IMR-90 (cell line): ENCODE measurements at regions of chr3 and their contacts with region 1.

Region 1: DNA sequence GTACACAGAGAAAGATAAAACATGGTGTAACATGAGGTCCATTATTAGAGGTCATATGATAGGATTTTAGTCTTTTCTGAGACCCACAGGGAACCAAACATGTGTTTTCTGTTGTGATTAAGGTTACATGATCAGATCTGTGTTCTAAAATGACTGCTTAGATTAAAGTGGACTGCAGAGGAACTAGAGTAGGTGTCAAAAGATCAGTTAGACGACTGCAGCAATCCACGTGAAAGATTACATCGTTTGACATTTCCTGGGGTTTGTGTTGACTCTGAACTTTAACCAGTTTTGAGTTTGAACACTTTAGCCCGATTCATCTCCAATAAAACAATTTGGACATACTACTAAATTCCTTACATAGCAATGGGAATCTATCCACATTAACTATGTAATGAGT is 5.1 kb downstream of the MIX23 start:
- DNase-seq: no peak
- ATAC-seq: no peak
- H3K4me3 ChIP-seq: no peak overlapping the region
- H3K27ac ChIP-seq: no peak overlapping the region
- H3K4me1 ChIP-seq: no peaks in the 10 kb centered on the region
- H3K27me3 ChIP-seq: no peaks in the 10 kb centered on the region
- CTCF ChIP-seq: no peak
- POLR2A ChIP-seq: no peak
- RAD21 ChIP-seq: no peak

Region 2: GRCh38 chr3:122283796-122284445 is 94.1 kb before region 1 on chr3:
- CTCF ChIA-PET with region 1: no interaction called
- POLR2A ChIA-PET with region 1: no interaction called
- dilution Hi-C with region 1: no loop called
- in situ Hi-C with region 1: no loop called
- intact Hi-C with region 1: no loop called
- DNase-seq: no peak
- ATAC-seq: no peak
- H3K4me3 ChIP-seq: no peak overlapping the region
- H3K27ac ChIP-seq: no peak overlapping the region
- H3K4me1 ChIP-seq: no peaks in the 10 kb centered on the region
- H3K27me3 ChIP-seq: peaks cover 10% of the 10 kb centered on the region
- CTCF ChIP-seq: no peak
- POLR2A ChIP-seq: no peak
- RAD21 ChIP-seq: no peak

Region 3: DNA sequence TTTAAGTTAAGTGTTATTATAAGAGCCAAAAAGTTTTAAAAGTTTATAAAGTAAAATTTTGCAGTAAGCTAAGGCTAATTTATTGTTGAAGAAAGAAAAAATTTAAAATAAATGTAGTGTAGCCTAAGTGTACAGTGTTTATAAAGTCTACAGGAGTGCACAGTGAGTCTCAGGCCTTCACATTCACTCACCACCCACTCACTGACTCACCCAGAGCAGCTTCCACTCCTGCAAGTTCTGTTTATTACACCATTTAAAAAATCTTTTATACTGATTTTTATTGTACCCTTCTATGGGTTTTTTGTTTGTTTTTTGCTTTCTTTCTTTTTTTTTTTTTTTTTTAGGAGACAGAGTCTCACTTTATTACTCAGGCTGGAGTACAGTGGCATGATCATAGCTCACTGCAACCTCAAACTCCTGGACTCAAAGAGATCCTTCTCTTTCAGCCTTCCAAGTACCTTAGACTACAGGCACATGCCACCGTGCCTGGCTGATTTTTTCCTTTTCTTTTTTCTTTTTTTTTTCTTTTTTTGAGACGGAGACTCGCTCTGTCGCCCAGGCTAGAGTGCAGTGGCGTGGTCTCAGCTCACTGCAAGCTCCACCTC is 27.1 kb before region 1 on chr3:
- CTCF ChIA-PET with region 1: no interaction called
- POLR2A ChIA-PET with region 1: interaction called, 22 read pairs
- dilution Hi-C with region 1: no loop called
- in situ Hi-C with region 1: no loop called
- intact Hi-C with region 1: no loop called
- DNase-seq: peak; percentile 87
- ATAC-seq: peak; percentile 98
- H3K4me3 ChIP-seq: no peak overlapping the region
- H3K27ac ChIP-seq: no peak overlapping the region
- H3K4me1 ChIP-seq: peaks cover 3% of the 10 kb centered on the region
- H3K27me3 ChIP-seq: no peaks in the 10 kb centered on the region
- CTCF ChIP-seq: no peak
- POLR2A ChIP-seq: no peak
- RAD21 ChIP-seq: no peak